PC-9 (cell line): ENCODE measurements at regions of chr3 and their contacts with region 1.

Region 1: DNA sequence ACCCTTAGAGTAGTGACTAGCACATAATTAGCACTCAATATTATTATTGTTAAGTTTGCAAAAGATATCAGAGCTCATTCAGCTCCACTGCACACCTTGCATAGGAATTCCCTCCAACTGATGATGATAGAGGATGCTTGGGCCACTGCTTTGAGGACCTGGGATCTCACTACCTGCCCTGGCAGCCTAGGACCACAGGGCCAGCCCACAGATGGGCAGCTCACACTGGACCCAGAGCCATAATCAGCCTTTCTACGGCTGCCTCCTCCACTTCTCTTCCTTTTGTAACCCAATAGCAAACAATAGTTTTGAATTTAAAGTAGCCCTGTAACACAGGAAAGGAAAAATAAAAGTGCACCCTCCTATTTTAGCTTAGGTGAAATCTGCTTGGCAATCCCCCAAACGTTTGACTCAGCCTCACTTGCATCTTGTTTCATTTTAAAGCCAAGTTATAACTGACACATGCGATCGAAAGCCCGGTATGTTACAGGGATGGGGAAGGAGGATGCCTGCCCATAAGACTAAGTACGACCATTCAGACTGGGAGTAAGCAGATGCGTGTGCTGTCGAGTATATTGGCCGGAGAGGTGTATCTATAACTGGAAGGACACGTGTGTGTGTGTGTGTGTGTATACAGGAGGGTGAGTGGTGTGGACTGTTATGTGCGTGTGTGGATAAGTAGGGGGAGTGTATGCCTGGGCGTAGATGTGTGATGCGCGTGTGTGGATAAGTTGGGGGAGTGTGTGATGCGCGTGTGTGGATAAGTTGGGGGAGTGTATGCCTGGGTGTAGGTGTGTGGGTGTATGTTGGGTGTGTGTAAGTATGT is 65.9 kb downstream of the CPN2 start:
- DNase-seq: no peak
- H3K4me3 ChIP-seq: no peak overlapping the region
- H3K27ac ChIP-seq: no peak overlapping the region
- H3K4me1 ChIP-seq: no peaks in the 10 kb centered on the region
- H3K27me3 ChIP-seq: no peaks in the 10 kb centered on the region
- CTCF ChIP-seq: no peak

Region 2: GRCh38 chr3:194306109-194306686 is 21.0 kb after region 1 on chr3:
- CTCF ChIA-PET with region 1: no interaction called
- POLR2A ChIA-PET with region 1: interaction called, 17 read pairs
- intact Hi-C with region 1: no loop called
- DNase-seq: no peak
- H3K4me3 ChIP-seq: no peak overlapping the region
- H3K27ac ChIP-seq: no peak overlapping the region
- H3K4me1 ChIP-seq: peaks cover 7% of the 10 kb centered on the region; the same call in 1 of the 2 replicates
- H3K27me3 ChIP-seq: no peaks in the 10 kb centered on the region
- CTCF ChIP-seq: no peak